H1 (cell line): ENCODE measurements at regions of chr2 and their contacts with region 1.

Region 1: DNA sequence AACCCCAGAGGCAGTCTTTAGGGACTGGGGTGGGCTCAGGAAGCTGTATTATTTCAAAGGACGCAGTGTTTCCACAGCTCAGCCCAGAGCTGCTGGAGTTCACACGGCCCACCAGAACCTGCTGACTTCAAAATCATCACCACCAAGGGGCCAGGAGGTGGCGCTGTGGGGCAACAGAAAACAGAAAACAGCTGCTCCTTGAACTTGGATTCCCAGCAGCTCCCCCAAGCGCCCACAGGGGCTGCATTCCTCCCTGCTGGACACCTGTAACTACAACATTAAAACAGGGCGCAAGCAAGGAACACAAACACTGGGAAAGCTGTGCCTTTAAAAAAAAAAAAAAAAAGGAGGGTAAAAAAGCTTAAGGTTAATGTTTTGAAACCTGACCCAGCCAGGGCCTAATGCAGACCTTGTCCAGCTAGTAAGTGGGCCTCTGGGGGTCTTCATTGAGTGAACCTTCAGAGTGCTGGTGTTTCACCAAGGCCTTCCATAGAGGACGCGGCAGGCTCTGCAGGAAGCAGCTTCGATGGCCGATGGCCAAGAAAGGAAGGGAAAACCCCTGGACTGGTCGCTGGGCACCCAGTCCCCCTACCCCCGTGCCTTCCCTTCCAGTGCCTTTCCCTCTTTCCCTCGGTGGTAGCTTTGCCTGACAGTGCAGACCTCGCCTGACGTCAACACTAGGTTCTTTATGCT is 25.9 kb downstream of the MLPH start:
- DNase-seq: peak; percentile 82 to 89
- H3K4me3 ChIP-seq: no peak overlapping the region
- H3K27ac ChIP-seq: no peak overlapping the region
- H3K4me1 ChIP-seq: peaks cover 0 to 3% (median 1%) of the 10 kb centered on the region in 4 experiments; a peak in 3 of 7 replicates
- H3K27me3 ChIP-seq: no peaks in the 10 kb centered on the region
- CTCF ChIP-seq: peak; percentile 84 to 99 (median 90)
- EP300 ChIP-seq: peak in 1 of 2 experiments; percentile 19; a peak in 1 of 3 replicates
- POLR2A ChIP-seq: no peak
- RAD21 ChIP-seq: peak; percentile 94 to 97

Region 2: DNA sequence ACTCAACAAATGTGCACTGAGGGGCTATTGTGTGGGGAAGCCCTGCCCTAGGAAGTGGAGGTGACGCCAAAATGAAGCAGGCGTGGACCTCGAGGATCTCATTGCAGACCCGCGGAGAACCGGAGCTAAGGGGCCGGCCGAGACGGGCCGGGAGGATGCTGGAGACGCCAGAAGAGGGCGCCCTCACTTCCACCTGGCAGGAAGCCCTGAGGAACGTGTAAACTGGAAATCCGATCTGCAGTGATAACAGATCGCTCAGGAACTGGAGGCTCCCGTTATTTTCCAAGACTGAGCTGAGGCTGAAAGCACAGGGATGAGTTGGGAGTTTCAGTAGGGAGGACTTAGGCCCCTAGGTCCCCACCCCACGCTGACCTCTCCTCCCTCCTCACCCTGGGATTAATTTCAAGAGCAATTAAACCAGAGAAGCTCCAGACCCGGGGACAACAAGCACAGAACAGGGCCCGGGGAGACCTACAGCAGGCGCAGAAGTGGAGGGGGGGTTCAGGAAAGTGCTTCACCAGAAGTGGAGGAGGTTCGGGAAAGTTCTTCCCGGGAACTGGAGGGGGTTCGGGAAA is 91.3 kb before region 1 on chr2:
- CTCF ChIA-PET with region 1: interaction called, 23 read pairs
- POLR2A ChIA-PET with region 1: no interaction called
- DNase-seq: peak; percentile 65 to 92
- H3K4me3 ChIP-seq: no peak overlapping the region
- H3K27ac ChIP-seq: no peak overlapping the region
- H3K4me1 ChIP-seq: no peaks in the 10 kb centered on the region; a peak in 1 of 7 replicates
- H3K27me3 ChIP-seq: no peaks in the 10 kb centered on the region; a peak in 1 of 7 replicates
- CTCF ChIP-seq: peak; percentile 89 to 92 (median 89)
- EP300 ChIP-seq: no peak
- POLR2A ChIP-seq: no peak
- RAD21 ChIP-seq: peak; percentile 70 to 77

Region 3: DNA sequence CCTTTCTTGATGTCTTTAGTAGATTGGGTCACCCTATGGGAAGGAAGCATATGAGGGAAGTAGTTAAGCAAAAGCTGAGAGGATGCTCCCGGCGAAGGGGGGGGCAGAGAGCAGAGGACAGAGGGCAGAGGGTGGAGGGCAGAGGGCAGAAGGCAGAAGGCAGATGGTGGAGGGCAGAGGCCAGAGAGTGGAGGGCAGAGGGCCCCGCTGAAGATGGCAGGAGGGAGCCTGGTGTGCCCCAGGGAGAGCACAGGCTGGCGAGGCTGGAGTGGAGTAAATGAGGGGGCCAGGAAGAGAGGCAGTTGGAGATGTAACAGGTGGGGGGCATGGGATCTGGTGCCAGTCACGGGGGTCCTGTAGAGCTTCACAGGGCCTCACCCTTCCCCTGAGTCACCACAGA is 18.8 kb before region 1 on chr2:
- CTCF ChIA-PET with region 1: interaction called, 78 read pairs
- POLR2A ChIA-PET with region 1: interaction called, 4 read pairs
- DNase-seq: no peak
- H3K4me3 ChIP-seq: no peak overlapping the region
- H3K27ac ChIP-seq: no peak overlapping the region
- H3K4me1 ChIP-seq: peaks cover 9 to 19% (median 10%) of the 10 kb centered on the region in 4 experiments
- H3K27me3 ChIP-seq: no peaks in the 10 kb centered on the region
- CTCF ChIP-seq: no peak
- EP300 ChIP-seq: no peak
- POLR2A ChIP-seq: no peak
- RAD21 ChIP-seq: no peak

Region 4: DNA sequence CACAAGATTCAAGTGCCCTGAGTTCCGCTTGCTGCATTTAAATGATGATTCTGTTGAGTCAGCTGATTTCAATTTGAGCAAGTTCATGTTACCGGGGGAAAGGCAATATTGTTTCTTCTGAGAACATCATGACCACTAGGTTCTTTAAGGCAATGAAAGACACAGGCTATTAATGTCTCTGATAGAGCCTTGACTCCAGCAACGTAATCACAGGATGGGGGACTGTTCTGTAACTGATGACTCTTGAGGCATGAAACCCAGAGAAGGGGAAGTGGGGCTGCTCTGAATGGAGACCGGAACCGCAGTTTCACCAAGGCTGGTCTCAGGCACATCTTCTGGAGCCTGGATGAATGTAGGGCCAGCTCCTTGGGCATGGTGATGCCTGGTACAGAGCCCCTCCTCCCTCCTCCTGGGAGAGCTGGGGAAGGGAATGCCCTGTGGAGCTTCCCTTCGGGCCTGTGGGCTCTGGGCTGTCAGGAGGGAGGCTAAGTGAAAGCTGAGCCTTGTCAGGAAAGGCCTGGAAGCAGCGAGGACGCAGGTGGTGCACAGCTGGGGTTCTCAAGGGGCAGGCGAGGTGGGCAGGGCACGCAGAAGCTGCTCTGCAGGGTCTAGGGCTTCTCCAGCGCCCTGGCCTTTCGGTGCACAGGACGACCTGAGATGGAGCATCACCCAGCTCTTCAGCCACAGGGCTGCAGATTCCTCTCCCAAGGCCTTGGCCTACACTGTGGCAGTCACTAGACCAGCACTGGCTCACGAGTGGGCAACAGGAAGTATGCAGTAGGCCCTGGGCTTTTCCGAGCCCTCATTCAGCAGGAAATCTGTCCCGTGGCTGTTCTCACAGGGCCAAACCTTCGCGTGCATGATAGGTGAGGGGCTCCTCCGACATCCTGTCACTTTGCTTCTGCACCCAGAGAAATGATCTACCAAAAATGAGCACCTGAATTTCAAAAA is 16.8 kb after region 1 on chr2:
- CTCF ChIA-PET with region 1: interaction called, 28 read pairs
- POLR2A ChIA-PET with region 1: interaction called, 9 read pairs
- DNase-seq: no peak
- H3K4me3 ChIP-seq: no peak overlapping the region
- H3K27ac ChIP-seq: no peak overlapping the region
- H3K4me1 ChIP-seq: no peaks in the 10 kb centered on the region; a peak in 1 of 7 replicates
- H3K27me3 ChIP-seq: no peaks in the 10 kb centered on the region
- CTCF ChIP-seq: no peak
- EP300 ChIP-seq: no peak
- POLR2A ChIP-seq: no peak
- RAD21 ChIP-seq: no peak

Region 5: DNA sequence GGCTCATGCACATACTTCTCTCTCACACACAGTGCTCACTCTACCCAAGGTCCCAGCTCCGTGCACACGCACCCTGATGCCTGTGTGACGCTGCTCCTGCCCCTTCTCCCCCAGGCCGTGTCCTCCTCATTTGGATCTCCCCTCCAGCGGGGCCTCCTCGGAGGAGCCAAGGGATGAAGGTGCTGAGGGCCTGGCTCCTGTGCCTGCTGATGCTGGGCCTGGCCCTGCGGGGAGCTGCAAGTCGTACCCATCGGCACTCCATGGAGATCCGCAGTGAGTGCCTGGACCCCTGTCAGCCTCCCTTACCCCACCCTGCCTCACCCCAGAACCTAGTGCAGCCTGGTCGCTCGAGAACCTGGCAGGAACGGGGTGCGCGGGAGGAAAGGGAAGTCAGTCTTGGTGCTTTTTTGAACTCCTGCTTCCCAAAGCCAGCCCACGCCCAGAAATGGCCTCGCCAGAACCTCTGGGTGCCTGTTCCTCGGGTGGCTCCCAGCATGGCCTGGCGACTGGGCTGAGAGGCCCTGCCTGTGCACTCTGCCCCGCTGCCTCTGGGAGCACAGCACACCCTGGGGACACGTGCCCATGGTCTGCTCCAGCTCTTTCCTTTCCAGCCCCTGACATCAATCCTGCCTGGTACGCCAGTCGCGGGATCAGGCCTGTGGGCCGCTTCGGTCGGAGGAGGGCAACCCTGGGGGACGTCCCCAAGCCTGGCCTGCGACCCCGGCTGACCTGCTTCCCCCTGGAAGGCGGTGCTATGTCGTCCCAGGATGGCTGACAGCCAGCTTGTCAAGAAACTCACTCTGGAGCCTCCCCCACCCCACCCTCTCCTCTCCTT is 53.7 kb after region 1 on chr2 and contains the start of gene PRLH:
- CTCF ChIA-PET with region 1: interaction called, 107 read pairs
- POLR2A ChIA-PET with region 1: interaction called, 5 read pairs
- DNase-seq: peak in 1 of 2 experiments; percentile 46
- H3K4me3 ChIP-seq: no peak within 1 kb of the TSS
- H3K27ac ChIP-seq: no peak within 1 kb of the TSS
- H3K4me1 ChIP-seq: peaks cover 0 to 4% (median 0%) of the 10 kb centered on the region in 4 experiments; a peak in 2 of 7 replicates
- H3K27me3 ChIP-seq: no peaks in the 10 kb centered on the region
- CTCF ChIP-seq: no peak
- EP300 ChIP-seq: no peak
- POLR2A ChIP-seq: no peak
- RAD21 ChIP-seq: no peak
- total RNA-seq, gene PRLH: not detected in 2 replicates

Region 6: DNA sequence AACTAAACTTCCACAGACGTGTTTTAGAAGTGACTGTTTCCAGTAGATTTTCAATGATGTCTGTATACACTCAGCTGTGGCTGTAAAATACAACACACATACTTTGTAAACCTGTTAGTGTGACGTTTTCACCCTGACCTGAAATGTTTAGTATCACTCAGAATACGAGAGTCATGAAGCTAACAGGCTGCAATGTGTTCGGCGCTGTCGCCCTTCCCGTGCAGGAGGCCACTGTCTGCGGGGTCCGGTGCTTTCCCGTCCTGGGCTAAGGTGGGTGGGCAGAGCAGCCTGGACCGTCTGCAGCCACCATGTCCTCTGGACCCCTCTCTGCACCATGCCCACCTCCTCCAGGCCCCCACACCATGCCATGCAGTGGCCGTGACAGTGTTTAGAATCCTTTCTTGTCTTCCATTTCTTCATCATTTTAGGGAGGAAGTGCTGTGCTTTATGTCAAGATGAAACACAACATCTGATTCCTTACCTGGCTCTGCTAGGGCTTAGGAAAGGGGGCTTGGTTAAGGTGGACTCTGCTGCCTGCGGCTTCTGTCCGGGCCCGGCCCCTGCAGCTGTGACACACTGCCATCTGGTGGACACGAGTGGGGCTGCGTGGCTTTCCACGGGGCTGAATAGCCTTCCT is 231.8 kb after region 1 on chr2:
- CTCF ChIA-PET with region 1: interaction called, 15 read pairs
- POLR2A ChIA-PET with region 1: no interaction called
- DNase-seq: peak; percentile 23 to 96
- H3K4me3 ChIP-seq: no peak overlapping the region
- H3K27ac ChIP-seq: no peak overlapping the region
- H3K4me1 ChIP-seq: peaks cover 0 to 7% (median 3%) of the 10 kb centered on the region in 4 experiments; a peak in 4 of 7 replicates
- H3K27me3 ChIP-seq: no peaks in the 10 kb centered on the region
- CTCF ChIP-seq: peak; percentile 92 to 93 (median 93)
- EP300 ChIP-seq: no peak
- POLR2A ChIP-seq: no peak
- RAD21 ChIP-seq: peak; percentile 97 to 99